Activated CD4-positive, alpha-beta T cell treated with anti-CD3 and anti-CD28 coated beads, Interleukin-2, amount 10 ng/mL, durations not matched to agents 24 days and 14 days (primary cell): ENCODE measurements at regions of chr4 and their contacts with region 1.

Region 1: DNA sequence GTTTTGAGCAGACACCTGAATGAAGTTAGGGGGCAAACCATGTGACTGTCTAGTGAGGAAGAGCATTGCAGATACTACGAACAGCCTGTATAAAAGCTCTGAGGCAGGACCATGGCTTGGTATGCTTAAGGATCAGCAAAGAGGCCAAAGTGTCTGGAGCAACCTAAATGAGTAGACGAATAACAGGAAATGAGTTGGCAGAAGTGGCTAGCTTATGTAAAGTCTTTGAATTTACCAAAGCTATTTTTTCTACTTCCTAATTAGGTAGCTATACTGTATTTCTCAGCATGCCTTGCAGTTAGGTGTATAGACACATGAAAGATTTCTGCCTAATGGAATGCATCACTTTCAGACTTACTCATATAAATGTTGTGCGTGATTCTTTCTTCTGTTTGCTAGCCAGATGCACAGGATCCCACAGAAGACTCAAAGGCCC is 9.3 kb upstream of the GPRIN3 start:
- DNase-seq: peak; percentile 76
- H3K4me3 Mint-ChIP-seq: peak overlapping the region; percentile 57
- H3K27ac Mint-ChIP-seq: peak overlapping the region; percentile 88
- H3K4me1 Mint-ChIP-seq: peaks cover 41% of the 10 kb centered on the region
- H3K27me3 Mint-ChIP-seq: no peaks in the 10 kb centered on the region

Region 2: GRCh38 chr4:89242864-89243732 is 73.9 kb before region 1 on chr4:
- intact Hi-C with region 1: loop called (anchors 1 kb)
- DNase-seq: peak; percentile 81
- H3K4me3 Mint-ChIP-seq: peak overlapping the region; percentile 55
- H3K27ac Mint-ChIP-seq: peak overlapping the region; percentile 94
- H3K4me1 Mint-ChIP-seq: peaks cover 48% of the 10 kb centered on the region
- H3K27me3 Mint-ChIP-seq: no peaks in the 10 kb centered on the region

Region 3: DNA sequence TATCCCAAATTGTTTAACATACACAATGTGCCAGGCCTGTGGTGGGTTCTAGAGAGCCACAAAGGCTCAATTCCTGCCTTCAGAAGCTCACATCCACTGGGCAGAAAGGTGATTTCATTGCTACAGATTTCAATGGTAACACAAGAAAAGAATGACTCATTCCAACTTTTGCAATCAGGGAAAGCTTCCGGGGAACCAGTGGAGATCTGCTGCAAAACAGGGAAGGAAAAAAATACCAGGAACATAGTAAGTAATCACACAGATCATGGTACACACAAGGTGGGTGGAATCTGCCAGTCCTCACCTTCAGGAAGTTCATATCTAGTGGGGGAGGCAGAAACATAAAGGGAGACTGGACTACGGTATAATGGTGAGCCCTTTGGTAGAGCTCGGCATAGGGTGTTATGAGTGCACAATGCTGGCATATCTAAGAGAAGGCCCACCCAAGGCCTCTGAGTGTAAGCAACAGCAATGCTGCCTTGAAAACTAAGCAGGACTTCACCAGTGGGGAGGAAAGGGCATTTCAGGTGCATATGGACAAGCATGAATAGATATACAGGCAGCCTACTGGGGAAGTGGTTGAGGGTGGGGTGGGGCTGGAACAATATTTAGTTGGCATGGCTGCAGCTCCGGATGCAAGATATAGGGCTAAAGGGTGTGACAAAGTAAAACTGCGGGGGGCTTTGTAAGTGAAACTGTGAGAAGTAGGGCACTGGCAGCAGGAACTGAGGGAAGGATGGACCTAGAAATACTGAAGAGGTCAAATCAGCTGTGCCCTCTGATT is 33.5 kb before region 1 on chr4:
- intact Hi-C with region 1: loop called (anchors 2 kb)
- DNase-seq: peak; percentile 72
- H3K4me3 Mint-ChIP-seq: peak overlapping the region; percentile 14
- H3K27ac Mint-ChIP-seq: peak overlapping the region; percentile 85
- H3K4me1 Mint-ChIP-seq: peaks cover 63% of the 10 kb centered on the region
- H3K27me3 Mint-ChIP-seq: no peaks in the 10 kb centered on the region

Region 4: GRCh38 chr4:89300499-89300898 is 16.4 kb before region 1 on chr4:
- intact Hi-C with region 1: loop called (anchors 2 kb)
- DNase-seq: no peak
- H3K4me3 Mint-ChIP-seq: peak overlapping the region; percentile 66
- H3K27ac Mint-ChIP-seq: peak overlapping the region; percentile 96
- H3K4me1 Mint-ChIP-seq: peaks cover 62% of the 10 kb centered on the region
- H3K27me3 Mint-ChIP-seq: no peaks in the 10 kb centered on the region

Region 5: GRCh38 chr4:89356086-89356485 is 39.1 kb after region 1 on chr4:
- intact Hi-C with region 1: no loop called
- DNase-seq: no peak
- H3K4me3 Mint-ChIP-seq: no peak overlapping the region
- H3K27ac Mint-ChIP-seq: no peak overlapping the region
- H3K4me1 Mint-ChIP-seq: no peaks in the 10 kb centered on the region
- H3K27me3 Mint-ChIP-seq: peaks cover 10% of the 10 kb centered on the region

Region 6: DNA sequence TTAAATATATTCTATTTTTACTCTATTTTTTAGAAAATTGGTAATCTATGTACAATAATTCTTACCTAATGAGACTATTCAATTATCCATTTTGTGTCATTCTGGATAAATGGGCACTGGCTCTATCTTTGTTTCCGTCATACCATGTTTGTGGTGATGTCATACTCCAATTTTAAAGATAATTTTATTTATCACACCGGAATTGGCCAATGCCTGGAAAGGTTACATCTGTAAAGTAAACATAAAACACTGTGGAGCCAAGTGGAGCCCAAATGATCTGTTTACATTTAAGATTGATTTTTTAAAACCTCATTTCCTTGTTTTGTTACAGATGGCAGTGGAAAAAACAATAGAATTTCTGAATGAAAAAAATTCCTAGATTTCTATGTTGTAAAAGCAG is 110.8 kb after region 1 on chr4:
- intact Hi-C with region 1: no loop called
- DNase-seq: no peak
- H3K4me3 Mint-ChIP-seq: no peak overlapping the region
- H3K27ac Mint-ChIP-seq: no peak overlapping the region
- H3K4me1 Mint-ChIP-seq: no peaks in the 10 kb centered on the region
- H3K27me3 Mint-ChIP-seq: no peaks in the 10 kb centered on the region

Region 7: DNA sequence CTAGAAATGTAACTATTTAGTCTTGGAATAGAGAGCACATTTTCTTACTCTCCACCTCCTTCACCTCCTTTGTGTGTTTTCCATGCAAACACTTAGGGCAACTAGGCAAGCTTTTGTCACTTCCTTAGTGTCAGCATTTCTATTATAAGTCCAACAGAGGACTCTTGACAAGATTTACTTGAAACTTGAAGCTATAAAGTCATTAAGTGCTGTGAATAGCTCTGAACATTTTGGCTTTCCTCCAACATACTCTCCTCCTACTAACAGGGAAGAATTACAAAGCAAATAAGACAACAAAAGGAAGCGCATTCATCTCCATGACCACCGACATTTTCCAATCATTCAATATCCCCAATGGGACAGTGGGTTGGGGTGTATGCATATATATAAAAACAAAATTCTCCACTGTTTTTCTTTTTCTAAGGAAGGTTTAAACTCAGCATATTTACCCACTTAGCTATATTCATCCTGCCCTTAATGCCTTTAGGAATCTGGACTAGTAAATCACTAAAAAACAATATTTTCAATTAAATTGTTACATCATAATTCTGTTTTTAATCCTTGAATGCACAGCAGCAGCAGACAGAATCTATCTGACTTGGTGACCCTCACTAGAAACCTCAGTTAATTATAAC is 255.4 kb after region 1 on chr4:
- intact Hi-C with region 1: no loop called
- DNase-seq: no peak
- H3K4me3 Mint-ChIP-seq: no peak overlapping the region
- H3K27ac Mint-ChIP-seq: no peak overlapping the region
- H3K4me1 Mint-ChIP-seq: no peaks in the 10 kb centered on the region
- H3K27me3 Mint-ChIP-seq: peaks cover 12% of the 10 kb centered on the region